ENCODE measurements at regions of chr16 and their contacts with region 1.

Region 1: GRCh38 chr16:67806428-67807147 is at the starts of genes RANBP10 and TSNAXIP1:
- DNase-seq: peak; percentile 90 to 99 (median 93)
- ATAC-seq: peak; percentile 92
- H3K4me3 ChIP-seq: peak within 1 kb of the TSS; percentile 97
- H3K4me3 Mint-ChIP-seq: peak within 1 kb of the TSS; percentile 91
- H3K27ac ChIP-seq: peak within 1 kb of the TSS; percentile 69 to 75
- H3K27ac Mint-ChIP-seq: peak within 1 kb of the TSS; percentile 76
- H3K4me1 ChIP-seq: peaks cover 50% of the 10 kb centered on the region
- H3K4me1 Mint-ChIP-seq: peaks cover 43% of the 10 kb centered on the region
- H3K27me3 ChIP-seq: no peaks in the 10 kb centered on the region
- H3K27me3 Mint-ChIP-seq: no peaks in the 10 kb centered on the region
- CTCF ChIP-seq: no peak
- total RNA-seq, gene RANBP10: 12.0 to 13.6 TPM
- total RNA-seq, gene TSNAXIP1: 0.52 to 0.61 TPM

Region 2: GRCh38 chr16:66880288-66881013 is 926.1 kb before region 1 on chr16 and contains the start of gene PDP2:
- CTCF ChIA-PET with region 1: no interaction called
- POLR2A ChIA-PET with region 1: no interaction called
- intact Hi-C with region 1: no loop called
- DNase-seq: peak; percentile 74 to 95 (median 86)
- ATAC-seq: peak; percentile 98
- H3K4me3 ChIP-seq: peak within 1 kb of the TSS; percentile 93
- H3K4me3 Mint-ChIP-seq: peak within 1 kb of the TSS; percentile 100
- H3K27ac ChIP-seq: no peak within 1 kb of the TSS
- H3K27ac Mint-ChIP-seq: peak within 1 kb of the TSS; percentile 75
- H3K4me1 ChIP-seq: peaks cover 32% of the 10 kb centered on the region
- H3K4me1 Mint-ChIP-seq: peaks cover 33% of the 10 kb centered on the region
- H3K27me3 ChIP-seq: no peaks in the 10 kb centered on the region
- H3K27me3 Mint-ChIP-seq: no peaks in the 10 kb centered on the region
- CTCF ChIP-seq: no peak
- total RNA-seq, gene PDP2: 3.3 to 5.9 TPM

Region 3: DNA sequence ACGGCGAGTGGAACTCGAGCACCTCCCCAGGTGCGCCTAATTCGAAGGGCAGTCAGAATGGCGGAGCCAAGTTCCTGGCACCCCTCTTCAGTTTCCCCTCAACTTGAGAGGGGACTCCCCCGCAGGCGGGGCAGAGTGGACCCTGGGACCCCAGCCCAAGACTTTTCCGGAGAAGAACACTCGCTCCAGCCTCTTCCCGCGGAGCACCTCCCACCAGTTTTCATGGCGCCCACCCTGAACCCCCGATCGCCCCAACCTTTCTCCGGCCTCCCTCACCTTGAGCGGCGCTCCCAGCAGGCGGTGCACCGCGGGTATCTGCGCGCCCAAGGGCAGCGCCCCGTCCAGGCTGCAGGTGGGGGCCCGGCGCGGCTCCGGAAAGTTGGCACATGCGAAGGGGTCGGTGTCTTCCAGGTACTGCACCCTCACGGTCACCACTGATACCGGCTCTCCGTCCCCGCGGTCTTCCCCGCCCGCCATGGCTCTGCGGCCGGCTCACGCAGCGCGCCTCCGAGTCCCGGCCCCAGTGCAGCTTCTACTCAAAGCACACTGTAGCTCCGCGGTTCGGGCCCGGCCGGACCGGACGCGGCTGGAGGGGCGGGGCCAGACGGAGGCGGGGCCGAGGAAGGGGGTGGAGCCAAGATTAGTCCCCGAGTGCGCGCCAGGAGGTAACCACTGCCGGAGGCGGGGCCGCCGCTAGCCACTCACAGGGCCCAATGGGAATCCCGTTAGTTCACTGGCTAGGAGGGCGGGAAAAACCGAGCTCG is 559.5 kb before region 1 on chr16 and contains the start of gene FHOD1:
- CTCF ChIA-PET with region 1: no interaction called
- POLR2A ChIA-PET with region 1: no interaction called
- intact Hi-C with region 1: loop called in 1 of 2 experiments (anchors 10 kb)
- DNase-seq: peak; percentile 86 to 99 (median 96)
- ATAC-seq: peak; percentile 74
- H3K4me3 ChIP-seq: peak within 1 kb of the TSS; percentile 87
- H3K4me3 Mint-ChIP-seq: peak within 1 kb of the TSS; percentile 97
- H3K27ac ChIP-seq: peak within 1 kb of the TSS; percentile 65 to 74
- H3K27ac Mint-ChIP-seq: peak within 1 kb of the TSS; percentile 68
- H3K4me1 ChIP-seq: peaks cover 72% of the 10 kb centered on the region
- H3K4me1 Mint-ChIP-seq: peaks cover 42% of the 10 kb centered on the region
- H3K27me3 ChIP-seq: peaks cover 0 to 6% of the 10 kb centered on the region in 2 experiments
- H3K27me3 Mint-ChIP-seq: peaks cover 13% of the 10 kb centered on the region
- CTCF ChIP-seq: no peak
- total RNA-seq, gene FHOD1: 21.1 to 26.0 TPM

Region 4: GRCh38 chr16:67667817-67668494 is 138.6 kb before region 1 on chr16:
- CTCF ChIA-PET with region 1: interaction called, 4 read pairs
- POLR2A ChIA-PET with region 1: no interaction called
- intact Hi-C with region 1: loop called (anchors 2 to 5 kb)
- DNase-seq: peak; percentile 71 to 94 (median 81)
- ATAC-seq: peak; percentile 91
- H3K4me3 ChIP-seq: peak overlapping the region; percentile 65
- H3K4me3 Mint-ChIP-seq: peak overlapping the region; percentile 90
- H3K27ac ChIP-seq: peak overlapping the region; percentile 28 to 44
- H3K27ac Mint-ChIP-seq: peak overlapping the region; percentile 55
- H3K4me1 ChIP-seq: peaks cover 36% of the 10 kb centered on the region
- H3K4me1 Mint-ChIP-seq: peaks cover 28% of the 10 kb centered on the region
- H3K27me3 ChIP-seq: no peaks in the 10 kb centered on the region
- H3K27me3 Mint-ChIP-seq: no peaks in the 10 kb centered on the region
- CTCF ChIP-seq: peak; percentile 74

Region 5: GRCh38 chr16:67781565-67781921 is 25.0 kb before region 1 on chr16:
- CTCF ChIA-PET with region 1: interaction called, 3 read pairs
- POLR2A ChIA-PET with region 1: interaction called, 14 read pairs
- intact Hi-C with region 1: no loop called
- DNase-seq: peak in 7 of 14 experiments; percentile 2 to 31 (median 23)
- ATAC-seq: peak; percentile 90
- H3K4me3 ChIP-seq: no peak overlapping the region
- H3K4me3 Mint-ChIP-seq: peak overlapping the region; percentile 8
- H3K27ac ChIP-seq: peak overlapping the region; percentile 49 to 56
- H3K27ac Mint-ChIP-seq: peak overlapping the region; percentile 92
- H3K4me1 ChIP-seq: peaks cover 25% of the 10 kb centered on the region
- H3K4me1 Mint-ChIP-seq: peaks cover 42% of the 10 kb centered on the region
- H3K27me3 ChIP-seq: no peaks in the 10 kb centered on the region
- H3K27me3 Mint-ChIP-seq: no peaks in the 10 kb centered on the region
- CTCF ChIP-seq: no peak

Region 6: GRCh38 chr16:67841764-67842508 is 35.3 kb after region 1 on chr16 and contains the start of gene THAP11:
- CTCF ChIA-PET with region 1: no interaction called
- POLR2A ChIA-PET with region 1: interaction called, 11 read pairs
- intact Hi-C with region 1: loop called (anchors 1 kb)
- DNase-seq: peak; percentile 90 to 97 (median 94)
- ATAC-seq: peak; percentile 55
- H3K4me3 ChIP-seq: peak within 1 kb of the TSS; percentile 96
- H3K4me3 Mint-ChIP-seq: peak within 1 kb of the TSS; percentile 98
- H3K27ac ChIP-seq: peak within 1 kb of the TSS; percentile 87 to 99
- H3K27ac Mint-ChIP-seq: peak within 1 kb of the TSS; percentile 95
- H3K4me1 ChIP-seq: peaks cover 50% of the 10 kb centered on the region
- H3K4me1 Mint-ChIP-seq: peaks cover 42% of the 10 kb centered on the region
- H3K27me3 ChIP-seq: no peaks in the 10 kb centered on the region
- H3K27me3 Mint-ChIP-seq: no peaks in the 10 kb centered on the region
- CTCF ChIP-seq: peak; percentile 85
- total RNA-seq, gene THAP11: 31.2 to 32.1 TPM

Measured in CD4-positive, alpha-beta T cell (primary cell).